Activated naive CD4-positive, alpha-beta T cell treated with anti-CD3 and anti-CD28 coated beads for 36 hours (primary cell): ENCODE measurements at regions of chr14 and their contacts with region 1.

Region 1: GRCh38 chr14:51989293-51990234 is at the start of gene RTRAF:
- DNase-seq: peak; percentile 93
- H3K4me3 Mint-ChIP-seq: peak within 1 kb of the TSS; percentile 89
- H3K27ac Mint-ChIP-seq: peak within 1 kb of the TSS; percentile 85
- H3K4me1 Mint-ChIP-seq: peaks cover 37% of the 10 kb centered on the region
- H3K27me3 Mint-ChIP-seq: no peaks in the 10 kb centered on the region
- total RNA-seq, gene RTRAF: 255 to 275 TPM

Region 2: DNA sequence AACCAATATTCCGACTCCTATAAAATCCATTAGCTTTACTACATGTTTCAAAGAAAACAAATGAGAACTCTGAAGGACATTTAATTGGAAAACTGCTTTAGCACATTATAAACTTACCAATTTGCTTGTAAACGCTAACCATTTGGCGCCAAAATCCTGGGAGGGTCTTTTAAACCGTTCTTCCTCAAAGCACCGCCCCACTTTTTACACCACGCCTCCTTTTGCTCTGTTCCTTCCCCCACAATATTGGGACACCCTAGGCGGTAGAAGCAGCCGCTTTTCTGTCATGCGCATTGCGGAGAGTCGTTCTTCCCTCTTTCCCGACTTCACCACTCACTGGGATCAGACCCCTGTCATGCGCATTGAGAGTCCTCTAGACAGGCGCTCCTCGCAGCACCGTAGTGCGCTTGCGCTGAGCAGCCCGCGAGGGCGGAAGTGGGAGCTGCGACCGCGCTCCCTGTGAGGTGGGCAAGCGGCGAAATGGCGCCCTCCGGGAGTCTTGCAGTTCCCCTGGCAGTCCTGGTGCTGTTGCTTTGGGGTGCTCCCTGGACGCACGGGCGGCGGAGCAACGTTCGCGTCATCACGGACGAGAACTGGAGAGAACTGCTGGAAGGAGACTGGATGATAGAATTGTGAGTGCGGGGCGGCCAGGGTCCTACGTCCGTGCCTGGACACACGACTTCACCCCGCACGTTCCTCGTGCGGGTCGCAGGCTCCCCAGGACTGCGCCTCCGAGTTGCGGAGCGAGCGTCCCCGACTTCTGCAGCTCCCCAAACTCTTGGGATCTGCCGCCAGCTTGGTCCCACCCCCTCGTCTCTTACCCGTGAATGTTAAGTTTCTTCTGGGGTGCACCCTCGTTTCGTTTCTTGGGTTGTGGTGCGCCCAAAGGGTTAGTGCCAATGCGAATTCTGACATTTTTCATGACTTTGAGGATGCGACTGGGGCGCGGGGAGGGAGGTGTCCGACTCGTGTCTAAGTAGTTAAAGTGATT is 749.5 kb before region 1 on chr14 and contains the start of gene TMX1:
- CTCF ChIA-PET with region 1: no interaction called
- intact Hi-C with region 1: loop called (anchors 10 kb)
- DNase-seq: peak; percentile 95
- H3K4me3 Mint-ChIP-seq: no peak within 1 kb of the TSS
- H3K27ac Mint-ChIP-seq: no peak within 1 kb of the TSS
- H3K4me1 Mint-ChIP-seq: peaks cover 28% of the 10 kb centered on the region
- H3K27me3 Mint-ChIP-seq: no peaks in the 10 kb centered on the region
- total RNA-seq, gene TMX1: 59.4 to 59.6 TPM

Region 3: DNA sequence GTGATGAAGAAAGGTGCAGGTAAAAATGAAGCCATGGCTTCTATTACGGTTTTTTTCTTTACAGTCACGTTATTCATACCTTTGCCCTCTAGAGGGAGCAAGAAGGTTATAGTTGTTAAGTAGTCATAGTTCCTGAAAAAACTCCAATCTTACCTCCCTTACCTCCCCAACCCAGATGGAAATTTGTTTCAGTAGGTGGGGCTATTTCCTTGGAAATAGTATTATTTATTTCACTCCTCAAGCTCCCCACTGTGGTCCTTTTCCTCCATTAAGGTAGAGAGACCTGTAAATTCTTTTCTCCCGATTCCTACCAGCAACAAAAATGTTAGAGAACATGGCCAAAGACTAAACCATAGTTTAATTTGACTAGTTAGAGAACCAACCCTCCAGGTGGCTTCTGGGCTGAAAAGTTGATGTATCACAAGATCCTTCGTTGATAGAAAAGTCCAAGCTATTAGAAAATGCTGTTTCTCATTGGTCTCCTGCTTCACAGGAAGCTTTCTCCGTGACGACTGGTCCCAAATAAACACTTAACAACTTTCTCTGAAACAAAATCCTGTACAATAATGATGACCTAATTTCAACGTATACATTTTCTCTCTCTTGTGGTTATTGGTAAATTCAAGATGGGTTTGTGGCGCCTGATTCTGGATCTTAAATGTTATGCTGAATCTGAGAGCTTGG is 706.0 kb before region 1 on chr14:
- CTCF ChIA-PET with region 1: no interaction called
- intact Hi-C with region 1: loop called (anchors 10 kb)
- DNase-seq: no peak
- H3K4me3 Mint-ChIP-seq: no peak overlapping the region
- H3K27ac Mint-ChIP-seq: no peak overlapping the region
- H3K4me1 Mint-ChIP-seq: no peaks in the 10 kb centered on the region
- H3K27me3 Mint-ChIP-seq: no peaks in the 10 kb centered on the region

Region 4: DNA sequence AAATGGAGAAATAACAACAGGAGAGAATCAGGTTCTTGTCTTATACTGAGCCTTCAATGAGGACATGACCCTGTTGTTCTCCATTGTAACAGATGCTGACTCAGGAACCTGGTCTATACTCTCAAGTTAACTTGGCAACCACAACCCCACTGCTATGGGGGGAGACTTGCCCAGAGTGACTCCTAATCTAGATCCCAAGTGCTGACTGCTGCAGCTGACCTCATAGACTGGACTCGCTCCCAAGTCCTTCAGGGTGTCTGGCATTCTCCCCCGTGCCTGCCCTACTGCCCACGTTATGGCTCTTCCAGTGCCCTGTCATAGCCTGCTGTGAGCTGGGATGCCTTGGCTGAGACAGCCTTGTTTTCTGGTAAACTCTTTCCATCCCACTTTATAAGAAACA is 42.2 kb after region 1 on chr14:
- CTCF ChIA-PET with region 1: no interaction called
- intact Hi-C with region 1: no loop called
- DNase-seq: no peak
- H3K4me3 Mint-ChIP-seq: no peak overlapping the region
- H3K27ac Mint-ChIP-seq: no peak overlapping the region
- H3K4me1 Mint-ChIP-seq: no peaks in the 10 kb centered on the region
- H3K27me3 Mint-ChIP-seq: no peaks in the 10 kb centered on the region

Region 5: DNA sequence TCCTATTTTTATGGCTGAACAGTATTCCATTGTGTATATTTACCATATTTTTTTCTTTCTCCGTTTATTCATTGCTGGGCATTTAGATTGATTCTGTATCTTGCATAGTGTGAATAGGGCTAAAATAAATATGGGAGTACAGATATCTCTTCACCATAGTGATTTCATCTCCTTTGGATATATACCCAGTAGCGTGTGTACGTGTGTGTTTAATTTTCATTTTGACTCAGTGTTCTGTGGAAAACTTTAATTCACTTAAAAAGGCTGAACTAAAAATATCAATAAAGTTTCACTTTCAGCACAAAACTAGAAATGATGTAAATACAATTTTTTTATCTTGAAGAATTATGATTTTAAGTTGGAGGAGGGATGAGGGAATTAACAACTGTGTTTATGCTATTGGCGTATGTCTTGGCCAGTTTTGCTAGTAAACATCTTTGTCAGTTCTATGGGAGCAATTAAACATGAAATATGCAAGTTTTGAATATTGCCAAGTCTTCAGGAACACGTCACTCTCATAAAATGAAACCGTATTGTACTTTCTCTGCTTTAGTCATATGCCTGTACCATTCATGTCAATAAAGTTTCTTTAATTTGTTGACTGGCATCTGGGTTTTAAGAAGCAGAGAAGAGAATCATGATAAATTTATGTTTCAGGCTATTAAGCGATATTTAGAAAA is 424.3 kb after region 1 on chr14:
- CTCF ChIA-PET with region 1: no interaction called
- intact Hi-C with region 1: loop called (anchors 10 kb)
- DNase-seq: no peak
- H3K4me3 Mint-ChIP-seq: peak overlapping the region; percentile 14
- H3K27ac Mint-ChIP-seq: peak overlapping the region; percentile 85
- H3K4me1 Mint-ChIP-seq: peaks cover 39% of the 10 kb centered on the region
- H3K27me3 Mint-ChIP-seq: no peaks in the 10 kb centered on the region

Region 6: GRCh38 chr14:52473557-52473956 is 484.0 kb after region 1 on chr14:
- CTCF ChIA-PET with region 1: no interaction called
- intact Hi-C with region 1: loop called (anchors 10 kb)
- DNase-seq: no peak
- H3K4me3 Mint-ChIP-seq: no peak overlapping the region
- H3K27ac Mint-ChIP-seq: no peak overlapping the region
- H3K4me1 Mint-ChIP-seq: peaks cover 4% of the 10 kb centered on the region
- H3K27me3 Mint-ChIP-seq: no peaks in the 10 kb centered on the region

Region 7: GRCh38 chr14:52695481-52696091 is 706.0 kb after region 1 on chr14 and contains the start of gene ERO1A:
- CTCF ChIA-PET with region 1: no interaction called
- intact Hi-C with region 1: loop called (anchors 10 kb)
- DNase-seq: peak; percentile 72
- H3K4me3 Mint-ChIP-seq: peak within 1 kb of the TSS; percentile 99
- H3K27ac Mint-ChIP-seq: peak within 1 kb of the TSS; percentile 99
- H3K4me1 Mint-ChIP-seq: peaks cover 33% of the 10 kb centered on the region
- H3K27me3 Mint-ChIP-seq: no peaks in the 10 kb centered on the region
- total RNA-seq, gene ERO1A: 87.4 to 90.4 TPM